ENCODE measurements at regions of chr4 and their contacts with region 1.

Region 1: DNA sequence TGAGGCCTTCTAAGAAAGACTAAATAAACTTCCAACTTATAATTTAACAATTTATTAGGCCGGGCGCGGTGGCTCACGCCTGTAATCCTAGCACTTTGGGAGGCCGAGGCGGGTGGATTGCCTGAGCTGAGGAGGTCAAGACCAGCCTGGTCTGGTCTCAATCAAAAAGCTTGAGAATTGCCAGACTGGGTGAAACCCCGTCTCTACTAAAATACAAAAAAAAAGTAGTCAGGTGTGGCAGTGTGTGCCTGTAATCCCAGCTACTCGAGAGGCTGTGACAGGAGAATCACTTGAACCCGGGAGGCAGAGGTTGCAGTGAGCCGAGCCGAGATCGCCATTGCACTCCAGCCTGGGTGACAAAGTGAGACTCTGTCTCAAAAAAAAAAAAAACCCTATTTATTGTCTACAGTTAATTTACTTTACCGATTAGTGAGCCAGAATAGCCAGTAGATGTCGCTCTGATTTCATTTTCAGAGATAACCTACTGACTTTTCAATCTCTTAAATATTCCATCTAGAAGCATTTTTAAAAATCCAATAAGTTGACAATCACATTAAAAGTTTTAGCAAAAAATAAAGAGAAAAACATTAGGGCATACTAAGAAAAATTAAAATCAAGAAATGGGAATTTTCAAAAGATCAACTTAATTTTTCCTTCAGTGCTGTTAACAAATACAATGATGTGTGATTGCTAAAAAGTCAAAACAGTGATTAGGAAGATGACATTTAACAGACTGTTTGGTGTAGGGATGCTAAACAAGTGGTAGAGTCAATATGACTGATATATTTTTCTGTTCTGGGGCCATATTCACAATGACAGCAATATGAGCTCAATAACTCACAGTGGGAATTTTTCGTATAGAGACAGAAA is 4.3 kb upstream of the SHROOM3 start:
- DNase-seq: peak in 1 of 10 donors; percentile 52

Region 2: DNA sequence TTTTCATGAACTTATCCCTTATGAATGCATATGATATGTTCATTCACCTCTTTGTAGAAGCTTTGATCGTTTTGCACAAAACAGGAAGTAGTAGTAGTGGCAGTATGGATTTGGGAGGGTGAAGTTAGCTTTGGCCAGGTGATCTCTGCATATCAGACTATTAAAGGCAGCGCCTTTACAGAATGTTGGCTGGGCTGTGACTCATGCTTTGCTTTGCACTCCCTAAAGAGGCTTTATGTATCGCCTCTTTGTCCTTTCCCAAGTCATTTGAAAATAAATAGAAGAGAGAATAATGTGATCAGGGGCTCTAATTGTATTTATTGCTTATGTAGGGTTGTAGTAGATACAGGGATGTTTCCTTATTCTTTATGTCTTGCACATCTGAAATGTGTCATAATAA is 54.7 kb after region 1 on chr4:
- intact Hi-C with region 1: no loop called
- DNase-seq: no peak

Region 3: DNA sequence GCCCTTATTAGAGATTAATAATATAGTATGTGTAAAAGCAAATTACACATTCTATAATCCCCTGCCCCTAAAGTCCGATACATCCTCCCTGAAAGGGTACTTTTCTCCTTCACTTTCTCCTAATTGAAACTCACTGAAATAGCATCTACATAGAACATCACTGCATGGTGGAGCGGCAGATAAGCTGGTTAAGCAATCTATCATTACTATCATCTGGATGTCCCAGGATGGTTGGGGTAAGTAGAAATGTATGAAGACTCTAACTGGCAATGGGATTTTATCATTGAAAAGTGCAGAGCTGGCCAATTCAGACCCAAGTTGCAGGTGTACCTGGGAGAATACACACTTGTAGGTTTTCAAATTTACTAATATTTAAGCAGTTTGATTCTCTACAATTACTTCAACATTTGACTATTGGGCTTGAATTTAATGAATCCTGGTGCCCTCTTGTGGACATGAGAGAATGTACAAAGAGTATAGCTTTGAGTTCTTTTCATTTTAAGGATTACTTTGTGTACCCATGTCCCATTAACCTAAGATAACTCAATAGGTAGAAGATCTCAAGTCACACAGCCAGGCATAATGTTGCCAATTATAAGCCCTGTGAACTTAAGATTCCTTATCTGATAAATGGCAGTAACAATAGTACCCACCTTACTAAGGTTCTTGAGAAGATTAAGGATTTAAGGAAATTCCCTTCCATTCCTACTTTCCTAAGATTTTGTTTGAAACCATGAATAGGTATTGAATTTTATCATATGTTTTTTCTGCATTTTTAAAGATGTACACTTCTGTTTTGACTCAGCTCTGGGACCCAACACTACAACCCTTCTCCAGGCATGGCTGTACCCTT is 74.1 kb after region 1 on chr4:
- intact Hi-C with region 1: loop called (anchors 1 kb)
- DNase-seq: no peak

Region 4: DNA sequence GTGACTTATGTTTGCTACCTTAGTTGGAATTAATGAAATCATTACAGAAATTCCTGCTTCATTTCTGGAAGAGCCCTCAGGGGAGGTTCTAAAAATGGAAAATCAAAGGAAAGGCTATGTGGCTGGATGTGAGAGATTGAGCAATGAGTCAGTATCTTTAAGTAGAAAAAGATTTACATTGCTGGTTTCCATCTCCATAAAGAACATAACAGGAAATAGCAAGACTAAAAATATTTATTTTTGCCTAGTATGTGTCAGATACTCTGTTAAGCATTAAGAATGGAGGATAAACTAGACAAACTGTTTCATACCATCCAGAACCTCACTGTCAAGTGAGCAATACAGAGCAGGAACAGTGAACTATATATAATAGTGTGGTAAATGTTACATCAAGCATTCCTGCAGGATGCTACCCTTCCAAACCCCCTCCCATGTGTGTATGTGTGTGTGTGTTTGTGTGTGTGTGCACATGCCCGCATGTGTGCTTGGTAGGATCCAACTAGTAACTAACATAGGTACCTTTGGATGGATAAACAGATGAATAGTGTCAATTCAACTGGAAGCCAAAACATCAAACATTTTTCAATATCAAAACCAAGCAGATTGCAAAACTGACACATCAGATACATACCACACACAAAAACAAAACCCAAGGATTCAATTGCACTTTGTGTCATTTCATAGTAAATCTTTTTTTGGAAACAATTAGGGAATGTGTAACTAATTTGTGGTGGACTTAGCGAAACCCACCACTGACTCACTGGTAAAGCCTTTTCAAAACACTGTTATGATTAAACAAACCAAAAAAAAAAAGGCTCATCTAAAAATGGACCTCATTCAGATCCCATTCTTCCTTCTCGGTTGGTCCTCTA is 227.7 kb after region 1 on chr4:
- intact Hi-C with region 1: no loop called
- DNase-seq: no peak

Region 5: DNA sequence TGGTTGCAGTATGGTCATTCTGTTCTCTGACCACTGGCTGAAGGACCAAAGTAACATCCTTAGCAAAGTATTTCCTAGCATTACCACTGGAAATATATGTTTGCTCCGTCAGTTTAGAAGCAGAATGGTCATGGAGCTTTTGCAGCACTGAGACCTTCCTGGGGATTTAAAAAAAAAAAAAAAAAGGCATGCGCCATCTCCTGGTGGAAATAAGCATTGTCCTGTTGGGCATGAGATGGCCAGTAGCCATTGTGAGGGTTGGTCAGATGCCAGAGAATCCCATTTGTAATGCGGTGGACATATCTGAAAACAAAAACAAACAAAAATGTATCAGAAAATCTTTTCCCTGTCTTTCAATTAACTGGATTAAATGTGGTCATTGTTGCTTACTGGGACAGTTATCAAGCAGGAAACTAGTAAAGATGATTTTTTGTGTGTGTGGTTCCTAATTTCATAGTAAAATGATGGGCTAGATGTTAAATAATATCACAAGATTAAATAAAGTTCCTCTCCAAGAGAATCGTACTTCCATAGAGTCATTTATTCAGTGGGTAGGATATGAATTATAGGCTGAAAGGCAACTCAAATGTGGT is 327.6 kb after region 1 on chr4:
- intact Hi-C with region 1: loop called (anchors 10 kb)
- DNase-seq: no peak

Region 6: GRCh38 chr4:77044461-77045150 is 613.9 kb after region 1 on chr4:
- intact Hi-C with region 1: loop called (anchors 10 kb)
- DNase-seq: no peak